ENCODE measurements at regions of chr11 and their contacts with region 1.

Region 1: DNA sequence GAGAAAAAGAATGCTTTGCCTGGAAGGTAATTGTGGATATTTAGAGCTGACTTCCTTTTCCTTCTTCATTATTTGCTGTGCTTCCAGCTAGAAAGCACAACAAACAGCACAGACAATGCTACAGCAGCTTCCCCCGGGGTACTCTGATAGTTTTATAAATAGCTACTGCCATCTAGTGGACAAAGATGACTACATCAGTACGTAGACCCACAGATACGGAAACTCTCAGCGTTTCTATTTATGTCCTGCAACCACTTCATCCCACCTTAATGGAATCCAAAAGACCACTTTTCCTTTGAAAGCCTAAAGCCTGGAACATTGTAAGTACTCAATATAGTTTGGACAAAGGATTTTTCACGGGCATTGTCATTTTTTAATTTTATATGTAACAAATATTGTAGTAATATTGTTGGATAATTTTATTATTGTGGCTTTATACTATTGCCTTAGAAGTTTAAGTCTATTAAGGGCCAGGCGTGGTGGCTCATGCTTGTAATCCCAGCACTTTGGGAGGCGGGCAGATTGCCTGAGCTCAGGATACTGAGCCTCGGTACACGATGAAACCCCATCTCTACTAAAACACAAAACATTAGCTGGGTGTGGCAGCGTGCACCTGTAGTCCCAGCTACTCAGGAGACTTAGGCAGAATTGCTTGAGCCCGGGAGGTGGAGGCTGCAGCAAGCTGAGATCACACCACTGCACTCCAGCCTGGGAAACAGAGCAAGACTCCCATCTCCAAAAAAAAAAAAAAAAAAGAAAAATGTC is 7.5 kb downstream of the HSPA8 start:
- DNase-seq: no peak
- ATAC-seq: peak; percentile 87
- H3K4me3 ChIP-seq: no peak overlapping the region
- H3K27ac ChIP-seq: no peak overlapping the region
- H3K4me1 ChIP-seq: no peaks in the 10 kb centered on the region; the same call in 1 of the 2 replicates
- H3K27me3 ChIP-seq: no peaks in the 10 kb centered on the region
- CTCF ChIP-seq: peak; percentile 61 to 74 (median 63)
- EP300 ChIP-seq: no peak
- POLR2A ChIP-seq: no peak
- RAD21 ChIP-seq: peak; percentile 58

Region 2: GRCh38 chr11:122727101-122727929 is 327.2 kb before region 1 on chr11:
- CTCF ChIA-PET with region 1: no interaction called
- POLR2A ChIA-PET with region 1: no interaction called
- RAD21 ChIA-PET with region 1: no interaction called
- SMC1A ChIA-PET with region 1: no interaction called
- in situ Hi-C with region 1: no loop called
- intact Hi-C with region 1: no loop called
- DNase-seq: no peak
- ATAC-seq: peak; percentile 78
- H3K4me3 ChIP-seq: peak overlapping the region; percentile 7; the same call in 1 of the 2 replicates
- H3K27ac ChIP-seq: 0 out of 2 replicates have a peak overlapping the region, but pooled peaks have one; percentile 15
- H3K4me1 ChIP-seq: peaks cover 12% of the 10 kb centered on the region
- H3K27me3 ChIP-seq: no peaks in the 10 kb centered on the region; a peak in 1 of 4 replicates
- CTCF ChIP-seq: no peak
- EP300 ChIP-seq: no peak
- POLR2A ChIP-seq: no peak
- RAD21 ChIP-seq: no peak

Region 3: GRCh38 chr11:122796128-122796717 is 258.3 kb before region 1 on chr11:
- CTCF ChIA-PET with region 1: interaction called, 35 read pairs
- POLR2A ChIA-PET with region 1: no interaction called
- RAD21 ChIA-PET with region 1: interaction called, 25 read pairs
- SMC1A ChIA-PET with region 1: interaction called, 27 read pairs
- in situ Hi-C with region 1: no loop called
- intact Hi-C with region 1: no loop called
- DNase-seq: no peak
- ATAC-seq: peak; percentile 98
- H3K4me3 ChIP-seq: no peak overlapping the region
- H3K27ac ChIP-seq: no peak overlapping the region
- H3K4me1 ChIP-seq: no peaks in the 10 kb centered on the region
- H3K27me3 ChIP-seq: no peaks in the 10 kb centered on the region
- CTCF ChIP-seq: peak; percentile 92 to 96 (median 93)
- EP300 ChIP-seq: no peak
- POLR2A ChIP-seq: no peak
- RAD21 ChIP-seq: peak; percentile 92

Region 4: GRCh38 chr11:122869622-122870021 is 184.9 kb before region 1 on chr11:
- CTCF ChIA-PET with region 1: interaction called, 387 read pairs
- POLR2A ChIA-PET with region 1: interaction called, 7 read pairs
- RAD21 ChIA-PET with region 1: interaction called, 122 read pairs
- SMC1A ChIA-PET with region 1: interaction called, 159 read pairs
- in situ Hi-C with region 1: no loop called
- intact Hi-C with region 1: no loop called
- DNase-seq: no peak
- ATAC-seq: peak; percentile 62
- H3K4me3 ChIP-seq: no peak overlapping the region
- H3K27ac ChIP-seq: no peak overlapping the region
- H3K4me1 ChIP-seq: no peaks in the 10 kb centered on the region; the same call in 1 of the 2 replicates
- H3K27me3 ChIP-seq: no peaks in the 10 kb centered on the region
- CTCF ChIP-seq: no peak
- EP300 ChIP-seq: no peak
- POLR2A ChIP-seq: no peak
- RAD21 ChIP-seq: no peak

Region 5: DNA sequence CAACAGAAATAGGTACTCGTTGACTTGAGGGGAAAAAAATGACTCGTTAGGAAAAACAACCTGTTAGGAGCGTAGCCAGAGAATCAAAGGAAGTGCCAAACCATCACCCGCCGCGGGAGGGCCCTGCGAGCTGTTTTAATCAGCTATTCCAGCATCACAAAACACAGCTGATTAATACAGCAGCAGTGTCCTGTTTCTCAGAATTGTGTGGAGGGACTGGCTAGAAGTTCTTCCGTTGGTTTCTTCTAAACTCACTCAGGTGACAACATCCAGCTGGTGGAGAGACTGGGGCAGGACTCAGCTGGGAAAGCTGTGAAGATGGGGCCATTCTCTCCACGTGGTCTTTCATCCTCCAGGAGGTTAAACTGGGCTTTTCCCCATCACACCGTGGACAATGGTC is 20.6 kb before region 1 on chr11:
- CTCF ChIA-PET with region 1: interaction called, 55 read pairs
- POLR2A ChIA-PET with region 1: no interaction called
- RAD21 ChIA-PET with region 1: interaction called, 8 read pairs
- SMC1A ChIA-PET with region 1: interaction called, 19 read pairs
- in situ Hi-C with region 1: no loop called
- intact Hi-C with region 1: no loop called
- DNase-seq: no peak
- ATAC-seq: peak; percentile 49; the same call in 1 of the 3 replicates
- H3K4me3 ChIP-seq: no peak overlapping the region
- H3K27ac ChIP-seq: no peak overlapping the region
- H3K4me1 ChIP-seq: no peaks in the 10 kb centered on the region
- H3K27me3 ChIP-seq: no peaks in the 10 kb centered on the region
- CTCF ChIP-seq: peak in 1 of 3 experiments; percentile 16; a peak in 1 of 6 replicates
- EP300 ChIP-seq: no peak
- POLR2A ChIP-seq: no peak
- RAD21 ChIP-seq: no peak

Region 6: GRCh38 chr11:123103326-123103980 is 49.0 kb after region 1 on chr11:
- CTCF ChIA-PET with region 1: interaction called, 20 read pairs
- POLR2A ChIA-PET with region 1: no interaction called
- RAD21 ChIA-PET with region 1: interaction called, 5 read pairs
- SMC1A ChIA-PET with region 1: interaction called, 10 read pairs
- in situ Hi-C with region 1: no loop called
- intact Hi-C with region 1: no loop called
- DNase-seq: no peak
- ATAC-seq: peak; percentile 82
- H3K4me3 ChIP-seq: no peak overlapping the region
- H3K27ac ChIP-seq: no peak overlapping the region
- H3K4me1 ChIP-seq: no peaks in the 10 kb centered on the region
- H3K27me3 ChIP-seq: peaks cover 0 to 2% of the 10 kb centered on the region in 2 experiments; a peak in 1 of 4 replicates
- CTCF ChIP-seq: peak; percentile 49 to 59 (median 58); a peak in 5 of 6 replicates
- EP300 ChIP-seq: no peak
- POLR2A ChIP-seq: no peak
- RAD21 ChIP-seq: peak; percentile 66

Region 7: GRCh38 chr11:123371506-123372297 is 317.2 kb after region 1 on chr11:
- CTCF ChIA-PET with region 1: no interaction called
- POLR2A ChIA-PET with region 1: no interaction called
- RAD21 ChIA-PET with region 1: no interaction called
- SMC1A ChIA-PET with region 1: no interaction called
- in situ Hi-C with region 1: no loop called
- intact Hi-C with region 1: no loop called
- DNase-seq: no peak
- ATAC-seq: peak; percentile 61
- H3K4me3 ChIP-seq: no peak overlapping the region
- H3K27ac ChIP-seq: no peak overlapping the region
- H3K4me1 ChIP-seq: peaks cover 6% of the 10 kb centered on the region; the same call in 1 of the 2 replicates
- H3K27me3 ChIP-seq: no peaks in the 10 kb centered on the region
- CTCF ChIP-seq: no peak
- EP300 ChIP-seq: no peak
- POLR2A ChIP-seq: no peak
- RAD21 ChIP-seq: no peak